B cell (primary cell): ENCODE measurements at regions of chr7 and their contacts with region 1.

Region 1: DNA sequence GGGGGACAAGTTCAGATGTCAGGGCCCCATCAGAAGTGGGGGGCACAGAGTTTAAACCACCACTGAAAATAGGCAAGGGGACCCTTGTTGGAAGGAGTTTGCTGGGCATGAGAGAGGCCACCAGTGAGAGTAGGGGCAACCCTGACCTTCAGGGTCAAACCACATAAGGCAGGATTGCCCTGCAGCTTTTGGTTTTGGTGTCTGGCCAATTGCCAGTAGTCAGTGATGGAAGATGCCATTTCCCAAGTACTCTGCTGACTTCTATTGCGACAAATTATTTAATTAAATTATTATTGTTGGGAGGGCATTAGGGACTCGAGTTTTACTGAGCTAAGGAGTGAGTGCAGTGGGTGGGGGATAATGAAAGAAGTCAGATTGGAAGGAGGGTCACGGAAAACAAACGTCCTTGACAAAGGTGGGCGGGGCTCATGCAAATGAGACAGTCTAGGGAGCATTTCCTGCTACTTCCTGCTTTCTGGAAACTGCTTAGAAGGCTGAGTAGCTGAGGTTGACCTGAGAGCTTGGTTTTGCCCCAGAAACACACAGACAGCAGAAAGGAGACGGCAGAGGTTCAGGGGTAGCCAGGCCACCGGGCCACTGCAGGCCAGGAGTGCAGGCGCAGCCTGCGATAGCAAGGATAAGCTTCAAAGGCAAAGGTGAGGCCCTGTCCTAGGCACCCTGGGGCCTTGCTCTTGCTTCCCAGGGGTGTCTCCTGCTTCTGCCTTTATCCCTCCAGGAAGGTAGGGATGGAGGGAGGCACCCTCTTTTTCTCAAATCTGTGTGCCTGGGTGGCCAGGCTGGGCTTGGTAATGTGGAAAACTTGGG is 74.1 kb upstream of the ANLN start:
- DNase-seq: no peak
- ATAC-seq: no peak
- H3K4me3 ChIP-seq: no peak overlapping the region
- H3K4me3 Mint-ChIP-seq: no peak overlapping the region
- H3K27ac ChIP-seq: no peak overlapping the region
- H3K27ac Mint-ChIP-seq: no peak overlapping the region
- H3K4me1 ChIP-seq: no peaks in the 10 kb centered on the region
- H3K4me1 Mint-ChIP-seq: no peaks in the 10 kb centered on the region
- H3K27me3 ChIP-seq: peaks cover 0 to 5% (median 0%) of the 10 kb centered on the region in 4 experiments
- H3K27me3 Mint-ChIP-seq: peaks cover 5% of the 10 kb centered on the region
- CTCF ChIP-seq: no peak

Region 2: DNA sequence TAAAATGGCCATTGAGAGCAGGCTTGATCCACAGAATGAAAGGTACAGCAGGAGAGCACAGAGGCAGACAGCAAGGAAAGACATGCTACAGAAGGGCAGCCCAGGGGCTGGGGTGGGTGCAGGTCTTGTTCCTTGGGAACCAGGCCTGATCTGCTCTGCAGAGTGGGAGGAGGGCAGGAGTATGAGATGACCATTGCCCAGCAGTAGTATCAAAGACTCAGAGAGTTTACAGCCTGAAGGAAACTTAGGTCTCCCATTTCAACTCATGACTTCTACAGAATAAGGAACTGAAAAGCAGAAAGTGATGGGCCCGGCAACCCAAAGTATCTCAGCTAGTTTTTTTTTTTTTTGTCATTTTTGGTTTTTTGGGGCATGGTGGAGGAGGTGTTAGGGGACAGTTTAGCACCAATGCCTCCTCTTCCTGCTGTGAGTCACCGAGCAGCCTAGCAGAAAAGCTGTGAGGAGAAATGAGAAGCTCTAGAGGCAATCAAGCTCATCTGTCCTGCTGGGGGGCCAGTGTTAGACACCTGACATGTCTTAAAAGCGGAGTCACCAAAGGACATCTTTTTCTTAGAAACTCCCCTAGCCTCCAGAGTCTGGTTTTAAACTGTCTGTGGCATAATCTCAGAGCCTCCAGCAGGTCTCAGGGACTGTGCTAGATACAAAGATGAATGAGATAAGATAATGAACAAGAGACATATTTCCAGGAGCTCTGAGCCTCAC is 586.3 kb before region 1 on chr7:
- CTCF ChIA-PET with region 1: no interaction called
- POLR2A ChIA-PET with region 1: no interaction called
- intact Hi-C with region 1: no loop called
- DNase-seq: peak; percentile 92
- ATAC-seq: peak; percentile 78
- H3K4me3 ChIP-seq: peak overlapping the region in 4 of 5 experiments; percentile 12 to 56 (median 28)
- H3K4me3 Mint-ChIP-seq: peak overlapping the region; percentile 79
- H3K27ac ChIP-seq: peak overlapping the region; percentile 93 to 99
- H3K27ac Mint-ChIP-seq: peak overlapping the region; percentile 99
- H3K4me1 ChIP-seq: peaks cover 73 to 77% of the 10 kb centered on the region in 2 donors
- H3K4me1 Mint-ChIP-seq: peaks cover 78% of the 10 kb centered on the region
- H3K27me3 ChIP-seq: no peaks in the 10 kb centered on the region
- H3K27me3 Mint-ChIP-seq: no peaks in the 10 kb centered on the region
- CTCF ChIP-seq: no peak

Region 3: GRCh38 chr7:35985126-35985754 is 330.3 kb before region 1 on chr7:
- CTCF ChIA-PET with region 1: interaction called, 37 read pairs
- POLR2A ChIA-PET with region 1: no interaction called
- intact Hi-C with region 1: loop called (anchors 1 kb)
- DNase-seq: peak; percentile 77
- ATAC-seq: peak; percentile 98
- H3K4me3 ChIP-seq: no peak overlapping the region
- H3K4me3 Mint-ChIP-seq: no peak overlapping the region
- H3K27ac ChIP-seq: no peak overlapping the region
- H3K27ac Mint-ChIP-seq: no peak overlapping the region
- H3K4me1 ChIP-seq: no peaks in the 10 kb centered on the region
- H3K4me1 Mint-ChIP-seq: no peaks in the 10 kb centered on the region
- H3K27me3 ChIP-seq: no peaks in the 10 kb centered on the region
- H3K27me3 Mint-ChIP-seq: peaks cover 7% of the 10 kb centered on the region
- CTCF ChIP-seq: peak; percentile 87

Region 4: GRCh38 chr7:36298106-36298505 is 17.4 kb before region 1 on chr7:
- CTCF ChIA-PET with region 1: interaction called, 14 read pairs
- POLR2A ChIA-PET with region 1: no interaction called
- intact Hi-C with region 1: no loop called
- DNase-seq: no peak
- ATAC-seq: no peak
- H3K4me3 ChIP-seq: no peak overlapping the region
- H3K4me3 Mint-ChIP-seq: no peak overlapping the region
- H3K27ac ChIP-seq: no peak overlapping the region
- H3K27ac Mint-ChIP-seq: no peak overlapping the region
- H3K4me1 ChIP-seq: no peaks in the 10 kb centered on the region
- H3K4me1 Mint-ChIP-seq: no peaks in the 10 kb centered on the region
- H3K27me3 ChIP-seq: no peaks in the 10 kb centered on the region
- H3K27me3 Mint-ChIP-seq: no peaks in the 10 kb centered on the region
- CTCF ChIP-seq: no peak

Region 5: GRCh38 chr7:36336390-36336789 is 20.9 kb after region 1 on chr7:
- CTCF ChIA-PET with region 1: interaction called, 24 read pairs
- POLR2A ChIA-PET with region 1: no interaction called
- intact Hi-C with region 1: no loop called
- DNase-seq: no peak
- ATAC-seq: no peak
- H3K4me3 ChIP-seq: no peak overlapping the region
- H3K4me3 Mint-ChIP-seq: no peak overlapping the region
- H3K27ac ChIP-seq: no peak overlapping the region
- H3K27ac Mint-ChIP-seq: no peak overlapping the region
- H3K4me1 ChIP-seq: no peaks in the 10 kb centered on the region
- H3K4me1 Mint-ChIP-seq: no peaks in the 10 kb centered on the region
- H3K27me3 ChIP-seq: peaks cover 0 to 2% (median 0%) of the 10 kb centered on the region in 4 experiments
- H3K27me3 Mint-ChIP-seq: peaks cover 14% of the 10 kb centered on the region
- CTCF ChIP-seq: no peak